ENCODE measurements at regions of chr10 and their contacts with region 1.

Region 1: GRCh38 chr10:44310762-44311562 is 73.9 kb downstream of the CXCL12 start:
- DNase-seq: peak; percentile 84 to 92
- H3K4me3 ChIP-seq: peak overlapping the region; percentile 25 to 47
- H3K27ac ChIP-seq: no peak overlapping the region
- H3K4me1 ChIP-seq: peaks cover 0 to 16% (median 11%) of the 10 kb centered on the region in 4 donors
- H3K27me3 ChIP-seq: no peaks in the 10 kb centered on the region
- CTCF ChIP-seq: peak; percentile 93 to 95

Region 2: DNA sequence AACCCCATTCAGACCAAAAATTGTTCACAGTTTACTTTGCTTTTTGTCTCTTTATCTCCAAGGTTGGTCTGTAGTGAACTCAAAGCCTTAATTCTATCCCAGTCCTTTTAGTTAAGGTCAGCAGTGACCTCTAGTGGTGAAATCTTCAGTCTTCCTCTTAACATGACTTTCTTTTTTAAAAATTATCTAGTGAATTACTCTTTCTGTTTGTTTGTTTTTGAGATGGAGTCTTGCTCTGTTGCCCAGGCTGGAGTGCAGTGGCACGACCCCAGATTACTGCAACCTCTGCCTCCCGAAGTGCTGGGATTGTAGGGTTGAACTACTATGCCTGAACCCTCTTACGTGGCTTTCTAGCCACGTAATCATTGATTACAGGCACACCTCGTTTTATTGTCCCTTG is 849.0 kb before region 1 on chr10:
- intact Hi-C with region 1: no loop called
- DNase-seq: no peak
- H3K4me3 ChIP-seq: no peak overlapping the region
- H3K27ac ChIP-seq: no peak overlapping the region
- H3K4me1 ChIP-seq: no peaks in the 10 kb centered on the region
- H3K27me3 ChIP-seq: no peaks in the 10 kb centered on the region
- CTCF ChIP-seq: peak; percentile 69 to 70

Region 3: DNA sequence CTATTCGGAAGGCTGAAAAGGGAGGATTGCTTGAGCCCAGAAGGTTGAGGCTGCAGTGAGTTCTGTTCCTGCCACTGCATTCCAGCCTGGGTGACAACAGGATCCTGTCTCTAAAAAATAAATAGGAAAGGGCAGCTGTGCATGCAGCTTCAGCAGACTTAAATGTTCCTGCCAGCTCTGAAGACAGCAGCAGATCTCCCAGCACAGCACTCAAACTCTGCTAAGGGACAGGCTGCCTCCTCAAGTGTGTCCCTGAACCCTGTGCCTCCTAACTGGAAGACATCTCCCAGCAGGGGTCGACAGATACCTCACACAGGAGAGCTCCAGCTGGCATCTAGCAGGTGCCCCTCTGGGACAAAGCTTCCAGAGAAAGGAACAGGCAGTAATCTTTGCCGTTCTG is 44.0 kb before region 1 on chr10:
- intact Hi-C with region 1: no loop called
- DNase-seq: no peak
- H3K4me3 ChIP-seq: no peak overlapping the region
- H3K27ac ChIP-seq: no peak overlapping the region
- H3K4me1 ChIP-seq: peaks cover 0 to 25% (median 6%) of the 10 kb centered on the region in 4 donors
- H3K27me3 ChIP-seq: no peaks in the 10 kb centered on the region
- CTCF ChIP-seq: no peak

Region 4: GRCh38 chr10:44864637-44865288 is 553.8 kb after region 1 on chr10:
- intact Hi-C with region 1: loop called (anchors 10 kb)
- DNase-seq: peak; percentile 91 to 95
- H3K4me3 ChIP-seq: peak overlapping the region; percentile 52 to 64
- H3K27ac ChIP-seq: peak overlapping the region; percentile 67 to 74
- H3K4me1 ChIP-seq: peaks cover 0 to 25% (median 22%) of the 10 kb centered on the region in 4 donors
- H3K27me3 ChIP-seq: no peaks in the 10 kb centered on the region
- CTCF ChIP-seq: peak; percentile 97 to 99